Caco-2 (cell line): ENCODE measurements at regions of chr10 and their contacts with region 1.

Region 1: DNA sequence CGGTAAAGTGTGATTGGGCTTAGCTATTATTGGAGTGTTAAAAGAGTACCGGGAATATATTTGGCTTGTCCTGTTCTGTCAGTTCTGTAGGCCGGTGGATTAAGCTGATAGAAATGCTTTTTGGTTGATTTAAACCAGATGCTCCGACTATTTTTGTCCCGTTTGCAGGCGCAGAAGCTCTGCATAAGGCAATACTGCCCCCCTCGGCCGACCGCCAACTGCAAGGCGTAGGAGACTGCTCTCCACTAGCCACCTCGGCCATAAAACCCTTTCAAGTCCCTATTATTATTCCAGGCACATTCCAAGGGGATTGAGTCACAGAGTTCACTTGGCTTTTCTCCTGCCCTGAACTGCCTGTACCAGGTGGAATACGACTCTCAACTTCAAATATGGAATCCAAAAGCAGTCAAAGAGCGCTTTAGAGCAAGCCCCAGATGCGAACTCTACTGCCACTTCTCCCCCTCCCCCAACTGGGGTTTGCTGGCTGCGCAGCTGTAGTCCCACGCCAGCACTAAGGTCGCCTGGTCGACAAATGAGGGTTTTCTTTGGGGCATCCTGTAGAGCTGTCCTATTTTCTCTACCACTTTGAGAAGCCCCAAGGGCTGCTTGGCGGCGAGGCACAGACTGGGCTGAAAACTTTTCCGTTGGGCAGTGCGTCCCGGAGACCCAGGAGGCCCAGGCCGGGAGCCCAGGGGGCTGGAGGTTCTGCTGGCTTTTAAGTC is 108.3 kb downstream of the REEP3 start:
- DNase-seq: peak; percentile 98
- H3K4me3 ChIP-seq: peak overlapping the region; percentile 64
- H3K4me3 Mint-ChIP-seq: peak overlapping the region; percentile 82
- H3K27ac Mint-ChIP-seq: peak overlapping the region; percentile 95
- H3K4me1 ChIP-seq: peaks cover 44% of the 10 kb centered on the region
- H3K4me1 Mint-ChIP-seq: peaks cover 36% of the 10 kb centered on the region
- H3K27me3 ChIP-seq: no peaks in the 10 kb centered on the region
- H3K27me3 Mint-ChIP-seq: no peaks in the 10 kb centered on the region
- CTCF ChIP-seq: peak; percentile 94 to 99

Region 2: DNA sequence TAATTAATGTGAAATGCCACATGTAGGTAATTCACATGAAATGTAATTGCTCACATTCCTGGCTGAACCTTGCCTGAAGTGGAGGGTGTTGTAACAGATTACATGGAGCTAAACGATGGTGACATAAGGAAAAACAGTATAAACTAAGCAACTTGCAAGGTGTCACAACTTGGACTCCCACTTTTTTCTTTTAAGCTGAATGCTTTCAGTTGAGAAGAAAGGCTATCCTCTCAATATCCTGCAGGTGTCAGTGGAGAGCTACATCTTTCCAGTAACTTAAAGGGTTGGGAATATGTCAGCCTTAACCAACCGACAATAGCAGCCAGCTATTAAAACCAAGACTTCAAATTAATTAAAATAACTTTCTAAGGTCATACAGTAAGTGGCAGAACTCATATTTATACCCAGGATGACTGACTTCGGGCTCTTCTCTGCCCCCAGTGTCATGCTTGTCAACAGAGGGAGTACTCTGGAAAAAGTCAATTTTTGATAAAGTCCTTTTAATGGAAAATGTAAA is 462.7 kb before region 1 on chr10:
- CTCF ChIA-PET with region 1: interaction called, 62 read pairs
- POLR2A ChIA-PET with region 1: interaction called, 15 read pairs
- intact Hi-C with region 1: loop called (anchors 1 kb)
- DNase-seq: peak in 1 of 2 experiments; percentile 80
- H3K4me3 ChIP-seq: no peak overlapping the region
- H3K4me3 Mint-ChIP-seq: no peak overlapping the region
- H3K27ac Mint-ChIP-seq: no peak overlapping the region
- H3K4me1 ChIP-seq: no peaks in the 10 kb centered on the region
- H3K4me1 Mint-ChIP-seq: peaks cover 6% of the 10 kb centered on the region
- H3K27me3 ChIP-seq: no peaks in the 10 kb centered on the region
- H3K27me3 Mint-ChIP-seq: no peaks in the 10 kb centered on the region
- CTCF ChIP-seq: peak; percentile 92 to 94

Region 3: GRCh38 chr10:63313066-63313717 is 316.3 kb before region 1 on chr10:
- CTCF ChIA-PET with region 1: no interaction called
- POLR2A ChIA-PET with region 1: no interaction called
- intact Hi-C with region 1: loop called (anchors 5 kb)
- DNase-seq: no peak
- H3K4me3 ChIP-seq: no peak overlapping the region
- H3K4me3 Mint-ChIP-seq: no peak overlapping the region
- H3K27ac Mint-ChIP-seq: no peak overlapping the region
- H3K4me1 ChIP-seq: no peaks in the 10 kb centered on the region
- H3K4me1 Mint-ChIP-seq: peaks cover 1% of the 10 kb centered on the region
- H3K27me3 ChIP-seq: no peaks in the 10 kb centered on the region
- H3K27me3 Mint-ChIP-seq: no peaks in the 10 kb centered on the region
- CTCF ChIP-seq: no peak

Region 4: DNA sequence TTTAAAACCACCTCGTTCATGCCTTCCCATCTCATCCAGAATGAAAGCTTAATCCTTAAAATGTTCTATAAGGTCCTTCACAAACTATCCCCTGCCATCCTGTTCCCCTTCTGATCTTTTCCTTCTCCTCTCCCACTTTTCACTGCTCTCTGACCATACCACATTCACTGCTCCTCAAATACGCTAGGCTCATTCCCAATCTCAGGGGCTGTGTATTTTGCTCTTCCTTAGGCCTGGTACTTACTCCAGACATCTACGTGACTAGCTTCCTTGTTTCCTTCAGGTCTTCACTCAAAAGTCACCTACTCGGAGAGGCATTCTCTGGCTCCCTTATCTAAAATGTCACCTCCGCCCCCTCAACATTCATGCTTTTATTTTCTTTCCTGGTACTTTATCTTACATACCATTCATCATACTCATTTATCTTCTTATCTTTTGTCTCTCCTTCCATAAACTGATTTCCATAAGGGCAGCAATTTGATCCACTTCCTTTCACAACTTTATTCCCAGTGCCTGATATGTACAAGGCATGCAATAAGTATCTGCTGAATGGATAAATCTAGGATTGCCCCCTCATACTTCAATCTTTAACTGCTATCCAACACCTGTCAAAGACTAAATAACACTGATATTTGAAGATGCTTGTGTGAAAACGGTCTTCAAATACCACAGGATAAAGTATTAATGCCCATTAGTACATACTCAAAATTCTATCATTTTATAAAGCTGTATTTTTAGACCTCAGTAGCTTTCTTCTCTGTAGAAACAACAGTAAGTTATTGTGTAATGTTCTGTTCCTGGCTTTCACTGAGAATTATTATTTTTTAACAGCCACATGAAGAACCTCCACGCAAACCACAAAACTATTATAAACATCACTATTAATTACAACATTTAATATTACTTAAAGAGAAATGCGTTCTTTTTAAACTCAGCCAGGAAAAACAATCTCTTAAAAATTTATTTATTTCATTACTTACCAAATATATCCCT is 190.7 kb before region 1 on chr10:
- CTCF ChIA-PET with region 1: no interaction called
- POLR2A ChIA-PET with region 1: no interaction called
- intact Hi-C with region 1: loop called (anchors 1 kb)
- DNase-seq: peak; percentile 58 to 71
- H3K4me3 ChIP-seq: no peak overlapping the region
- H3K4me3 Mint-ChIP-seq: no peak overlapping the region
- H3K27ac Mint-ChIP-seq: no peak overlapping the region
- H3K4me1 ChIP-seq: peaks cover 79% of the 10 kb centered on the region
- H3K4me1 Mint-ChIP-seq: peaks cover 13% of the 10 kb centered on the region
- H3K27me3 ChIP-seq: no peaks in the 10 kb centered on the region
- H3K27me3 Mint-ChIP-seq: no peaks in the 10 kb centered on the region
- CTCF ChIP-seq: no peak

Region 5: DNA sequence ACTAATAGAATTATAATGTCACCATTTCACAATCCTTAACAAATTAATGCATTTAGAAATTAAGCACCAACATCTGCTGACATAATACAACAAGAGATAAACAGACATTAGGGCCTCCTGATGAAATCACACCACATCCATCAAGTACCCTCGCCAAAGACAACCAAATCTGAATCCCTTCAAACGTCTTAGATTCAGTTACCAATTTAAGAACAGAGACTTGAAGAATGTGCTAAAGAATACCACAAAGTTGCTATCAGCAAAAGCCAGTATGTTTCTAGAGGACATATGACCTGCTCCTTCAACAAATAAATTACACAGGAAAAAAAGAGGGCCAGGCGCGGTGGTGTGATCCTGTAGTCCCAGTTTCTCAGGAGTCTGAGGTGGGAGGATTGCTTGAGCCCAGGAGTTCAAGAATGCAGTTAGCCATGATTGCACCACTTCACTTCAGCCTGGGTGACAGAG is 36.2 kb after region 1 on chr10:
- CTCF ChIA-PET with region 1: interaction called, 6 read pairs
- POLR2A ChIA-PET with region 1: interaction called, 18 read pairs
- intact Hi-C with region 1: loop called (anchors 1 kb)
- DNase-seq: peak in 1 of 2 experiments; percentile 17
- H3K4me3 ChIP-seq: no peak overlapping the region
- H3K4me3 Mint-ChIP-seq: peak overlapping the region; percentile 87
- H3K27ac Mint-ChIP-seq: peak overlapping the region; percentile 89
- H3K4me1 ChIP-seq: peaks cover 11% of the 10 kb centered on the region
- H3K4me1 Mint-ChIP-seq: peaks cover 15% of the 10 kb centered on the region
- H3K27me3 ChIP-seq: no peaks in the 10 kb centered on the region
- H3K27me3 Mint-ChIP-seq: no peaks in the 10 kb centered on the region
- CTCF ChIP-seq: no peak

Region 6: DNA sequence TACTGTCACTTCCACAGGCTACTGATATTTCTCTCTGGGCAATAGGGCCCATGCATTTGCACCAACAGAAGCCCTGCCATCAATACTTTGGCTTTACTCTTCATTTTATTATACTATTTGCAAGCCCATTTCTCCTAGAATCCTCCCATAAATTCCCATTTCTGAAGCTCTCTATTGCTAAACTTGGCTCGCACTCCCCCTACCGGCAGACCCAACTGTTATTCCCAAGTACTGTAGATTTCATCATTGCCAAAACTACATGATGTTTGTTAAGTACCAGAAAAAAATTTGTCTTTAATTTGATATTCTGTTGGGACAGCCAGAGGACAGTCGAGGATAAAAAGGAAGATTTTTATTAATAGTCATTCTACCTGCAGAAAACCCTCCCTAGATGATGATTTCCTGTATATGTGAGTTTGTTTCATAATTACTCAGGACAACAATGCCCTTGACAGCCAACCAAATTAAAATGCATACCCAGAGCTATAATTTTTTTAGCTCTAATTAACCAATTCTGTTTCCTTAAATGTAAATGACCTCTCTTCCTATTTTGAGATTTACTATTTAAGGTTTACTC is 190.3 kb after region 1 on chr10:
- CTCF ChIA-PET with region 1: interaction called, 4 read pairs
- POLR2A ChIA-PET with region 1: no interaction called
- intact Hi-C with region 1: loop called (anchors 5 kb)
- DNase-seq: peak; percentile 74 to 84
- H3K4me3 ChIP-seq: no peak overlapping the region
- H3K4me3 Mint-ChIP-seq: no peak overlapping the region
- H3K27ac Mint-ChIP-seq: no peak overlapping the region
- H3K4me1 ChIP-seq: no peaks in the 10 kb centered on the region
- H3K4me1 Mint-ChIP-seq: no peaks in the 10 kb centered on the region
- H3K27me3 ChIP-seq: no peaks in the 10 kb centered on the region
- H3K27me3 Mint-ChIP-seq: peaks cover 7% of the 10 kb centered on the region
- CTCF ChIP-seq: peak; percentile 95 to 98